A549 (cell line): ENCODE measurements at regions of chr3 and their contacts with region 1.

Region 1: GRCh38 chr3:64462203-64462602 is 225.6 kb downstream of the ADAMTS9 start:
- DNase-seq: no peak
- ATAC-seq: no peak
- H3K4me3 ChIP-seq: no peak overlapping the region
- H3K27ac ChIP-seq: no peak overlapping the region
- H3K4me1 ChIP-seq: no peaks in the 10 kb centered on the region
- CTCF ChIP-seq: no peak
- EP300 ChIP-seq: no peak
- POLR2A ChIP-seq: no peak
- RAD21 ChIP-seq: no peak

Region 2: DNA sequence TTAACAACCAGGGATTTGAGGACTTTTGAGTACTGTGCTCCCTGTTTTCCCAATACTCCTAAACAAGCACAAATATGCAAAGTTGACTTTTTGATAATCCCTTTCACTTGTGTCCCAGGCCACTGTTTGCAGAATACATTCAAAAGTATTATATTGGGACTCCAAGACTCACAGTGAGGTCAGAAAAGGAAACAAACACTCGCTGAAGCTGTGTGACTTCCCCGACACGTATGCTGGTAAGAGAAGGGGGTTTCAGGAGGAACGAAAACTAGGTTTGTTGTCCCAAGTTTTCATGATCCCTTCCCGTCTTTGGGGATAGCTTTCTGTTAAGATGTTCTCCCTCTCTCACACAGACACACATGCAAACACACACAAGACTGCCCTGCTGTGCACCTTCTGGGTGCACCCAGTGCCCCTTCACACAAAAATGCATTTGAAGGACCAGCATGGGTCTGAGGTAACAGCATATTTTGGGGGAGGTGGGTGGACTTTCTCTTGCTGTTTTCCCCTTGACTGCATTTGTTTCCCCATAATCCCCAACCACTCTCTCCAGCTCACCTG is 11.7 kb before region 1 on chr3:
- CTCF ChIA-PET with region 1: interaction called, 13 read pairs
- POLR2A ChIA-PET with region 1: no interaction called
- DNase-seq: no peak
- ATAC-seq: no peak
- H3K4me3 ChIP-seq: no peak overlapping the region
- H3K27ac ChIP-seq: no peak overlapping the region
- H3K4me1 ChIP-seq: no peaks in the 10 kb centered on the region
- CTCF ChIP-seq: no peak
- EP300 ChIP-seq: no peak
- POLR2A ChIP-seq: no peak
- RAD21 ChIP-seq: no peak